Tibial artery (tissue), 4 donors: ENCODE measurements at regions of chrX and their contacts with region 1.

Region 1: DNA sequence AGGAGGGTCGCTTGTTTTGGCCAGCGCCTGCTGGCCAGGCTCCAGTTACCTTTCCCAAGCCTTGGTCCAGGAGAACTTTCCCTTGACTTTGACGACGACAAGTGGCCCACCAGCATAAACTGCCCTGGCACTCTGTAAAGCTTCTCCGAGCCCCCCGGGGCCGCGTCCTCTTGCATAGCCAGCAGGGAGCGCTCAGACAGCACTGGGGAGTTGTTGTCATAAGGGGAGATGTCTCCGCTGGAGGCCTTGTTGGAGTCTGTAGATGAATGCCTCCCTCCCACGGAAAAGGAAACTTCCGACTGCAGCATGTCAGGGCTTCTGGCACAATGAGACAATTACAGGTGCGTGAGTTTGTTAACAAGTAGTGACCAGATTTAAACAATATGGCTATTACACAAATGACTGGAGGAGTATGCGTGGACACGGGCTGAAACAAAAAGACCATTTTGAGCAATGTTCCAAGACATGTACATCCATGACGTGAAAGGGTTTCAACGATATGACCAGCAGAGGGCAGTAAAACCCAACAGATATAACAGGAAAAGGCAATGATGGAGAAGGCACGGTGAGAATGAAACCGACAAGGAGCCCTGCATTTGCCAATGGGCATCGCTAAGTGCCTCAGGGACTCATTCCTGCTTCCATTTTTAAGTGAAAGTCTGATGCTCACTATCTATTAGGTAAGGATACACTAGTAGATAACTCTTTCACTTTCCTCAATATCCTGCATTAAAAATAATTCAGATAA is 33.0 kb downstream of the HCCS start:
- DNase-seq: peak in 1 of 2 donors; percentile 60
- H3K4me3 ChIP-seq: no peak overlapping the region
- H3K27ac ChIP-seq: no peak overlapping the region
- H3K4me1 ChIP-seq: no peaks in the 10 kb centered on the region
- H3K27me3 ChIP-seq: no peaks in the 10 kb centered on the region
- CTCF ChIP-seq: peak; percentile 46 to 60

Region 2: GRCh38 chrX:11770320-11770719 is 626.2 kb after region 1 on chrX:
- intact Hi-C with region 1: loop called (anchors 10 kb)
- DNase-seq: no peak
- H3K4me3 ChIP-seq: no peak overlapping the region
- H3K27ac ChIP-seq: no peak overlapping the region
- H3K4me1 ChIP-seq: no peaks in the 10 kb centered on the region
- H3K27me3 ChIP-seq: no peaks in the 10 kb centered on the region
- CTCF ChIP-seq: peak; percentile 68 to 74